ENCODE measurements at regions of chr7 and their contacts with region 1.

Region 1: GRCh38 chr7:71009636-71010035 is 122.3 kb upstream of the GALNT17 start:
- DNase-seq: no peak
- H3K4me3 ChIP-seq: no peak overlapping the region
- H3K4me3 Mint-ChIP-seq: no peak overlapping the region
- H3K27ac ChIP-seq: no peak overlapping the region
- H3K27ac Mint-ChIP-seq: no peak overlapping the region
- H3K4me1 ChIP-seq: no peaks in the 10 kb centered on the region
- H3K4me1 Mint-ChIP-seq: no peaks in the 10 kb centered on the region
- H3K27me3 ChIP-seq: no peaks in the 10 kb centered on the region
- H3K27me3 Mint-ChIP-seq: peaks cover 0 to 1% (median 0%) of the 10 kb centered on the region in 3 donors
- CTCF ChIP-seq: no peak

Region 2: DNA sequence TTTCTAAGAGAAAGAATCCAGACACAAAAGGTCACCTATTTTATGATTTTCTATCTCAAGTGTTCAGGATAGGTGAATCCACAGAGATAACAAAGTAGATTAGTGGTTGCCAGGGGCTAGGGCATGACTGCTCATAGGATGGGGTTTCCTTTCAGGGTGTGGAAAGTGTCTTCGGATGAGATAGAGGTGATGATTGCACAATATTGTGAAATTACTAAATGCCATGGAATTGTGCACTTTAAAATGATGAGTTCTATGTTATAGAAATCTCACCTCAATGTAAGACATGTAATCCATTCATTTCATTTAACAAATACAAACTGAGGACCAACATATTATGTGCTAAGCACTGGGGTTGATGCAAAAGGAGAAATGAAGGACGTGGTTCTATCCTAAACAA is 45.9 kb after region 1 on chr7:
- intact Hi-C with region 1: loop called in 1 of 2 experiments (anchors 10 kb)
- DNase-seq: no peak
- H3K4me3 ChIP-seq: no peak overlapping the region
- H3K4me3 Mint-ChIP-seq: no peak overlapping the region
- H3K27ac ChIP-seq: no peak overlapping the region
- H3K27ac Mint-ChIP-seq: no peak overlapping the region
- H3K4me1 ChIP-seq: no peaks in the 10 kb centered on the region
- H3K4me1 Mint-ChIP-seq: no peaks in the 10 kb centered on the region
- H3K27me3 ChIP-seq: no peaks in the 10 kb centered on the region
- H3K27me3 Mint-ChIP-seq: no peaks in the 10 kb centered on the region
- CTCF ChIP-seq: no peak

Region 3: DNA sequence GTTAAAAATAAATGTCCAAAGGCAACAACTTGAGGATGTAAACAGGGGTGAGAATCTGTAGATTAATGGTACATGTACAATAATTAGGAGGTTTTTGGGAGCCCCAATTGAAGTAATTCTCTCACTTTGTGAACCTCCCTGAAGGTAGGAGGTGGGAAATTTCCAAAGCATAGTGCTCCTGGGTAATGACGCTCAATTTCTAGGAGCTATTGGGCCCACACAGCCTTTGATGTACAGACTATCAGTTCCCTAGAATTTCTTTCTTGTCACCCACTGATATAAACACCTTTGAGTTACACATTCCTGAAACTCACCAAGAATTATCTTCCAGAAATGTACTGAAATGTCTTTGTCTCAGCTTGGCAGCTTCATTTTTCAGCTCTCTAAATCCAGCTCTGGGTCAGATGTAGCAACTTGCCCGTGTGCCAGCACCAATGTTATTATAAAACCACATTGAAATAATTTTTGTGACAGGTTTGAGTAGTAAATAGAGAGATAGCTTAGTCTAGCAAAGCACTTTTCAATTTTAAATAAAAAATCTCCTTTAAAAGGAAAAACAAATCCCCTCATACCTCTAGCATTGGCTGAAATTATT is 85.7 kb after region 1 on chr7:
- intact Hi-C with region 1: no loop called
- DNase-seq: no peak
- H3K4me3 ChIP-seq: no peak overlapping the region
- H3K4me3 Mint-ChIP-seq: no peak overlapping the region
- H3K27ac ChIP-seq: no peak overlapping the region
- H3K27ac Mint-ChIP-seq: no peak overlapping the region
- H3K4me1 ChIP-seq: no peaks in the 10 kb centered on the region
- H3K4me1 Mint-ChIP-seq: no peaks in the 10 kb centered on the region
- H3K27me3 ChIP-seq: no peaks in the 10 kb centered on the region
- H3K27me3 Mint-ChIP-seq: peaks cover 0 to 2% (median 0%) of the 10 kb centered on the region in 3 donors
- CTCF ChIP-seq: no peak

Measured in CD14-positive monocyte (primary cell).